Natural killer cell (primary cell): ENCODE measurements at regions of chr18 and their contacts with region 1.

Region 1: DNA sequence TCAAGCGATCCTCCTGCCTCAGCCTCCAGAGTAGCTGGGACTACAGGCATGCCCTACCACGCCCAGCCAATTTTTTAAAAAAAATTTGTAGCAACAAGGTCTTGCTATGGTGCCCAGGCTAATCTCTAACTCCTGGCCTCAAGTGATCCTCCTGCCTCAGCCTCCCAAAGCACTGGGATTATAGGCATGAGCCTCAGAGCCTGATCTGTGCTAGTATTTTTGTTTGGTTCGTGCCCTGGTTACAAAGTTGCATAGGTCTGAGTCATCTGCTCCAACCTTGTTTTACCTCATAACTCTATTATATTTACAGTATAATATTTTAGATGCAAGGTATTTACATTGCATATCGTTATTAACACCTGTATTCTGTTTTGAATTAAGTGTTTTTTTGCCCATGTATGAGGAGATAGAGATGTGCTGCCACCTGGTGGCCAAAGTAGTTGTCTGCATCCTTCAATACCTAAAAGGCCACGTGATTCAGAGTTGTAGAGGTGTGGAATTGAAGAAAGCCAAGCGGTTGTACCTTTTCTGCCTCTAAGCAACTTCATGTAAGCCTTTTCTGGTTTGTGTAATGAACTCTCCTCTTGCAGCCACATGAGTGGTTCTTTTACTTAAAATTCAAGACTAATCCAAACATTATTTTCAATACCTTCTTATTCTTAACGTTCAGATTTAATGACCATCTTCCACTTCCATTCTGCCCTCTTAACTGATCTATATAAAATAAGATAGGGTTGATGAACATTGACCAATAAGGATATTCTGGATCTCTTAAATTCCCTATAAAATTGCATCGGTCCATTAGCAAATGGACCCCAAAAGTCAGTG is 19.9 kb upstream of the CABYR start:
- DNase-seq: peak; percentile 66 to 94
- ATAC-seq: peak; percentile 90 to 91 (median 90)
- H3K4me3 ChIP-seq: no peak overlapping the region
- H3K4me3 Mint-ChIP-seq: no peak overlapping the region
- H3K27ac ChIP-seq: no peak overlapping the region
- H3K27ac Mint-ChIP-seq: no peak overlapping the region
- H3K4me1 ChIP-seq: peaks cover 8% of the 10 kb centered on the region
- H3K4me1 Mint-ChIP-seq: peaks cover 27 to 29% of the 10 kb centered on the region in 2 donors
- H3K27me3 ChIP-seq: no peaks in the 10 kb centered on the region
- H3K27me3 Mint-ChIP-seq: no peaks in the 10 kb centered on the region
- CTCF ChIP-seq: peak; percentile 95

Region 2: GRCh38 chr18:23503038-23503962 is 615.7 kb before region 1 on chr18 and contains the start of gene RMC1:
- intact Hi-C with region 1: loop called (anchors 5 kb)
- DNase-seq: peak; percentile 97 to 98
- ATAC-seq: peak; percentile 89 to 97 (median 91)
- H3K4me3 ChIP-seq: peak within 1 kb of the TSS; percentile 81
- H3K4me3 Mint-ChIP-seq: peak within 1 kb of the TSS; percentile 98
- H3K27ac ChIP-seq: peak within 1 kb of the TSS; percentile 90
- H3K27ac Mint-ChIP-seq: peak within 1 kb of the TSS; percentile 94
- H3K4me1 ChIP-seq: peaks cover 47% of the 10 kb centered on the region
- H3K4me1 Mint-ChIP-seq: peaks cover 53 to 55% of the 10 kb centered on the region in 2 donors
- H3K27me3 ChIP-seq: no peaks in the 10 kb centered on the region
- H3K27me3 Mint-ChIP-seq: no peaks in the 10 kb centered on the region
- CTCF ChIP-seq: no peak
- total RNA-seq, gene RMC1: 71.1 to 84.4 (median 77.2) TPM

Region 3: DNA sequence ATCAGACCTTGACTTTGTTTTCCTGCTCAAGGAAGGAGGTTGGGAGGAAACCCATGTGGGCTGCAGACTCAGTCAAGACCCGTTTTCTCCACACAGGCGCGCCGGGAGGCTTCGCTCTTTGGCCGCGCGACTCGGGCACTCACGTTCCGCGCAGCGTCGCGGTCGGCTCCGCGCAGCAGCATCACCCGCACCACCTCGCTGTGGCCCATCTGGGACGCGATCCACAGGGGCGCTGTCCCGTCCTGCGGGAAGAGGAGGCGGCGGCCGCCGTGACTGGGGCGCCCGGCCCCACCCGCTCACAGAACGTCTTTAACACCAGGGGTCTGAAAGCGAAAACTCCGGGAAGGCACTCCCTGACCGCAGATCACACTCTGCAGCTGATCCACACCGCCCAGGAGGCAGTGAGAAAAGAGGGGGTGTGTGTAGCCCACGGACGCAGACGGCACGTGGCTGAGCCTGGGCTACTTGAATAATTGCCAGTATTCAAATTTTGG is 499.5 kb before region 1 on chr18:
- intact Hi-C with region 1: loop called (anchors 1 kb)
- DNase-seq: peak; percentile 20 to 30
- ATAC-seq: peak; percentile 61 to 76 (median 72)
- H3K4me3 ChIP-seq: no peak overlapping the region
- H3K4me3 Mint-ChIP-seq: peak overlapping the region; percentile 68
- H3K27ac ChIP-seq: no peak overlapping the region
- H3K27ac Mint-ChIP-seq: no peak overlapping the region
- H3K4me1 ChIP-seq: peaks cover 11% of the 10 kb centered on the region
- H3K4me1 Mint-ChIP-seq: peaks cover 16 to 25% of the 10 kb centered on the region in 2 donors
- H3K27me3 ChIP-seq: peaks cover 26% of the 10 kb centered on the region
- H3K27me3 Mint-ChIP-seq: peaks cover 37 to 43% of the 10 kb centered on the region in 2 donors
- CTCF ChIP-seq: no peak

Region 4: GRCh38 chr18:23812546-23813440 is 306.2 kb before region 1 on chr18:
- intact Hi-C with region 1: loop called (anchors 5 kb)
- DNase-seq: peak in 1 of 2 donors; percentile 60
- ATAC-seq: peak in 2 of 3 donors; percentile 59
- H3K4me3 ChIP-seq: no peak overlapping the region
- H3K4me3 Mint-ChIP-seq: no peak overlapping the region
- H3K27ac ChIP-seq: no peak overlapping the region
- H3K27ac Mint-ChIP-seq: no peak overlapping the region
- H3K4me1 ChIP-seq: peaks cover 2% of the 10 kb centered on the region
- H3K4me1 Mint-ChIP-seq: peaks cover 0 to 9% of the 10 kb centered on the region in 2 donors
- H3K27me3 ChIP-seq: no peaks in the 10 kb centered on the region
- H3K27me3 Mint-ChIP-seq: peaks cover 0 to 10% of the 10 kb centered on the region in 2 donors
- CTCF ChIP-seq: peak; percentile 72

Region 5: DNA sequence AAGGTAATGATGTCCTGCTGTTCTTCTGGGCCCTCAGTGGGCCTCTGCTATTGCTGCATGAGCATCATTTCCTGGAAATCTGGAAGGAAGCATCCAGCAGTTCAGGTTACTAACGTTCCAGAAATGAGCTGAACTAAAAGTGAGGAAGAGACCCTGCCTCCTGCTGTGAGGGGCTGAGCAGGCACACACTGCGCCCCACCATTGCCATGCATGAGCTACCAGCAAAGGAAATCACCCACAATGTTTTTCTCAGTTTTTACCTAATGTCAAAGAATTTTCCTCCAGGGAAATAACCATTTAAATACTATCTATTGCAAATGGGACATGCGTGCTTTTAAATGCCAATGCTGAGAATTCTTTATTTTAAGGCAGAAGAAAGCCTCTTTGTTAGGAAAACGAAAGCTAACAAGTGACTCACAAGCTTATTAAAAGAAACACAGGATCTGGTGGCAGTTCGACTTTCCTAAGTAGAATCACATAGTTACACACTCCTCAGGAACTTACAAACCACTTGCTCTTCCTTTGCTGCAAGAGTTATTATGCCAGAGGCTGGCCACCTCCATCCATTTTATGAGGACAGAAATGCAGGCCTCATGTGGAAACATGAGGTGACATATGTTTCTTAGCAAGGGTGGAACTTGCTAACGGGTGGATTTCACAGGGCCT is 257.0 kb before region 1 on chr18:
- intact Hi-C with region 1: no loop called
- DNase-seq: no peak
- ATAC-seq: no peak
- H3K4me3 ChIP-seq: no peak overlapping the region
- H3K4me3 Mint-ChIP-seq: no peak overlapping the region
- H3K27ac ChIP-seq: peak overlapping the region; percentile 31
- H3K27ac Mint-ChIP-seq: peak overlapping the region; percentile 84 to 87
- H3K4me1 ChIP-seq: peaks cover 40% of the 10 kb centered on the region
- H3K4me1 Mint-ChIP-seq: peaks cover 47 to 51% of the 10 kb centered on the region in 2 donors
- H3K27me3 ChIP-seq: no peaks in the 10 kb centered on the region
- H3K27me3 Mint-ChIP-seq: no peaks in the 10 kb centered on the region
- CTCF ChIP-seq: no peak

Region 6: GRCh38 chr18:23967321-23968089 is 151.5 kb before region 1 on chr18:
- intact Hi-C with region 1: loop called (anchors 1 kb)
- DNase-seq: peak; percentile 56 to 62
- ATAC-seq: peak; percentile 75 to 86 (median 77)
- H3K4me3 ChIP-seq: no peak overlapping the region
- H3K4me3 Mint-ChIP-seq: peak overlapping the region; percentile 47
- H3K27ac ChIP-seq: peak overlapping the region; percentile 43
- H3K27ac Mint-ChIP-seq: peak overlapping the region in 1 of 2 donors; percentile 61
- H3K4me1 ChIP-seq: peaks cover 52% of the 10 kb centered on the region
- H3K4me1 Mint-ChIP-seq: peaks cover 67 to 68% of the 10 kb centered on the region in 2 donors
- H3K27me3 ChIP-seq: no peaks in the 10 kb centered on the region
- H3K27me3 Mint-ChIP-seq: peaks cover 0 to 14% of the 10 kb centered on the region in 2 donors
- CTCF ChIP-seq: no peak

Region 7: GRCh38 chr18:24027156-24027827 is 91.7 kb before region 1 on chr18:
- intact Hi-C with region 1: no loop called
- DNase-seq: no peak
- ATAC-seq: no peak
- H3K4me3 ChIP-seq: no peak overlapping the region
- H3K4me3 Mint-ChIP-seq: no peak overlapping the region
- H3K27ac ChIP-seq: no peak overlapping the region
- H3K27ac Mint-ChIP-seq: peak overlapping the region in 1 of 2 donors; percentile 26
- H3K4me1 ChIP-seq: peaks cover 39% of the 10 kb centered on the region
- H3K4me1 Mint-ChIP-seq: peaks cover 70 to 71% of the 10 kb centered on the region in 2 donors
- H3K27me3 ChIP-seq: no peaks in the 10 kb centered on the region
- H3K27me3 Mint-ChIP-seq: no peaks in the 10 kb centered on the region
- CTCF ChIP-seq: no peak